PC-3 (cell line): ENCODE measurements at regions of chr5 and their contacts with region 1.

Region 1: DNA sequence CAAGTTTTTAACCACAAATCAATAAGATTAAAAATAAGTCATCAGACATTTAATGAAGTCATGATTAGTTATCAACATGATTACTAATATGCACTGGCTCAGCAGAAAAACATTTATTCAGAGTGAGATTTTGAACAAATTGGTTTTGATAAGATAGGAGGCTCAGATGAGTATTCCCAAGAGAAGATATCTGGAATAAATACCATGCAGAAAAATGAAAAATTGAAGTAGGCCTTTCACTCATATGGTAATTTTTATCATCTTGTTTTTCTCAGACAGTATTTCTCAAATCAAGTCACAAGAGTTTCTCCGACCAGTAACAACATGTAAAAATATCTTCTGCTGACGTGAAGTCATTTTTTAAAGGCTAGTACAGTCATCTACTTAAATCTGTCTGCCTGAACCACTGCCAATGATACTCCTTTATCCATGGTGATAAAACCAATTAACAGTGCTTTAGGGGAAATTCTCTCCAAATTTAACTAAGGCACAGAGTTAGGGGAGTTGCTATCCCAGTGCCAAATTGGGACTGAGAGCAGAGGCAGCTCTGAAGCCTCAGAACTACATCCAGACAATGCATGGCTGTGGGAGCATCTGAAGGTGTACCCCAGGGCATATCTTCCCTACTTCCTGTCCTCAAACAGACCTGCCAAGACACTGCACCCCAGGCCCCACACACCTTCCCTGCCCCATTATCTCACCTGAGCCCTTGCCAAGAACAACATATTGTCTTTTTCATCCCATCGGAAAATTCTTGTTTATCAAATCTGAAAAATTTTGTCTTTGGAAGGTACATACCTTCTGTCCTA is 105.5 kb upstream of the TSLP start:
- DNase-seq: peak; percentile 52
- ATAC-seq: peak; percentile 39
- H3K4me3 ChIP-seq: no peak overlapping the region
- H3K27ac ChIP-seq: peak overlapping the region; percentile 96
- H3K4me1 ChIP-seq: peaks cover 68% of the 10 kb centered on the region
- H3K27me3 ChIP-seq: no peaks in the 10 kb centered on the region
- CTCF ChIP-seq: no peak

Region 2: GRCh38 chr5:110785326-110785725 is 180.7 kb before region 1 on chr5:
- CTCF ChIA-PET with region 1: no interaction called
- POLR2A ChIA-PET with region 1: no interaction called
- intact Hi-C with region 1: loop called (anchors 1 kb)
- DNase-seq: peak; percentile 96
- ATAC-seq: peak; percentile 93
- H3K4me3 ChIP-seq: peak overlapping the region; percentile 3; the same call in 1 of the 2 replicates
- H3K27ac ChIP-seq: peak overlapping the region; percentile 92
- H3K4me1 ChIP-seq: peaks cover 22% of the 10 kb centered on the region
- H3K27me3 ChIP-seq: no peaks in the 10 kb centered on the region
- CTCF ChIP-seq: no peak

Region 3: GRCh38 chr5:110899566-110900412 is 66.2 kb before region 1 on chr5:
- CTCF ChIA-PET with region 1: no interaction called
- POLR2A ChIA-PET with region 1: no interaction called
- intact Hi-C with region 1: loop called (anchors 1 kb)
- DNase-seq: peak; percentile 92
- ATAC-seq: peak; percentile 72
- H3K4me3 ChIP-seq: peak overlapping the region; percentile 22; the same call in 1 of the 2 replicates
- H3K27ac ChIP-seq: peak overlapping the region; percentile 96
- H3K4me1 ChIP-seq: peaks cover 39% of the 10 kb centered on the region
- H3K27me3 ChIP-seq: no peaks in the 10 kb centered on the region
- CTCF ChIP-seq: no peak

Region 4: GRCh38 chr5:110951373-110951791 is 14.6 kb before region 1 on chr5:
- CTCF ChIA-PET with region 1: no interaction called
- POLR2A ChIA-PET with region 1: no interaction called
- intact Hi-C with region 1: loop called (anchors 1 kb)
- DNase-seq: peak; percentile 77
- ATAC-seq: peak; percentile 73
- H3K4me3 ChIP-seq: no peak overlapping the region
- H3K27ac ChIP-seq: peak overlapping the region; percentile 79
- H3K4me1 ChIP-seq: peaks cover 24% of the 10 kb centered on the region
- H3K27me3 ChIP-seq: no peaks in the 10 kb centered on the region
- CTCF ChIP-seq: no peak

Region 5: DNA sequence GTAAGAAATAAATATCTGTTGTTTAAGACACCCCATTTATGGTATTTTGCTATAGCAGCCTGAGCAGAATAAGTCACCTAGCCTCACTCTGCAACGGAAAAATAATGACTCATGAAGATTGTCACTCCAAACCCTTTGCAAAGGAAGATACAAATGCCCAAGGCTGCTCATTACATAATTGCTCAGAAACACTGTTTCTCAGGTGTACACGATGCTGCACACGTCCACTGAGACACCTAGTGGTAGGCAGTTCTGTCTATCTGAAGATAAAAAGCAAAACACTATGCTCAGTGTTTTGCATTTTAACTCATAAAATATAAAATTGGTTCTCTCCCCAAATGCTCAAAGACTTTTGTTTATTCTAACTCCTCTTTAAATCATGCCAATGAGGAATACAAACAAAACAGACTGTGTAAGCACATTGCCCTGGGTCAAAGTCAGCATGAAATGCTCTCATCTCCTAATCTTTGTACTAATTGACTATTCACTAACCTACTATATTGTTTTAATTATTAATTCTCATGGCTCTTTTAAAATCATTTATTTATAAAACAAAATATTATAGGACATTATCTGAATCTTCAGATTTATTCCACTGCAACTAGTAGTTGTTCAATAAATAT is 97.8 kb after region 1 on chr5:
- CTCF ChIA-PET with region 1: no interaction called
- POLR2A ChIA-PET with region 1: no interaction called
- intact Hi-C with region 1: loop called (anchors 1 kb)
- DNase-seq: peak; percentile 93
- ATAC-seq: peak; percentile 83
- H3K4me3 ChIP-seq: no peak overlapping the region
- H3K27ac ChIP-seq: peak overlapping the region; percentile 28; the same call in 1 of the 2 replicates
- H3K4me1 ChIP-seq: peaks cover 33% of the 10 kb centered on the region
- H3K27me3 ChIP-seq: no peaks in the 10 kb centered on the region
- CTCF ChIP-seq: peak; percentile 95